Right ventricle myocardium inferior (tissue), 1 donor: ENCODE measurements at regions of chr16 and their contacts with region 1.

Region 1: DNA sequence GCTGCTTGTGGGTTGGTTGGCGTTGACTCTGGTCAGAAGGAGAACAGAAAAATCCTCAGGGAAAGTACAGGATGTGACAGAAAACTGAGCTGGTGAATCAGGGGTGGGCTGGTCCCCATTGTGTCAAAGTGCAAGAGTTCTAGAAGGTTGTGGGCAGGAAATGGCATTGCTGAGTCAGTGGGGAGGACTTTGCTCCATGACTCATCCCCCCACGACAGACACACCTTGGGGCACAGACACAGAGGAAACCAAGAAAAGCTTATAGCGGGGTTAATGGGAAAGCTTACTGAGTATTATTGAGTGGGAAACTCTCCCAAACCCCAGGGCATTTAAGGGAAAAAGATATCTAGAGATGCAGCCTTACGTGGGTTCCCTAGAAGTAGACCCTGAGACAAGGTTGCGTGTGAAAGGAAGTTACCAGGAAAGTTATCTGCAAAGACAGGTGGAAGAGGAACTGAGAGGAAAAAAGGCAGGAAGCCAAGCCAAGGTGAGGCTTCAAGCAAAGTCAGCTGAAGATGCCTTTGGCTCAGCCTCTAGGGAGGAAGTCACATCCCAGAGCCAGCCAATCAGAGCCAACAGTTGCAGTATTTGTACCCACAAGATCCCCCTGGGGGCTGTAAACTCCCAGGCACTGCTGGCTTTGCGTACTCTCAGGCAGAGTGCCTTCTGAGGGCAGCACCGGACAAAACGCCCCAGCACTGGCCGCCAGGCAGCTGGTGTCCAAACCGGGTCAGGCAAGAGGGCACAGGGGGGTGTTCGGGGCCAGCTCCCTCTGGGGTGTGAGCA is 86.4 kb downstream of the FOXL1 start:
- DNase-seq: no peak
- ATAC-seq: no peak

Region 2: DNA sequence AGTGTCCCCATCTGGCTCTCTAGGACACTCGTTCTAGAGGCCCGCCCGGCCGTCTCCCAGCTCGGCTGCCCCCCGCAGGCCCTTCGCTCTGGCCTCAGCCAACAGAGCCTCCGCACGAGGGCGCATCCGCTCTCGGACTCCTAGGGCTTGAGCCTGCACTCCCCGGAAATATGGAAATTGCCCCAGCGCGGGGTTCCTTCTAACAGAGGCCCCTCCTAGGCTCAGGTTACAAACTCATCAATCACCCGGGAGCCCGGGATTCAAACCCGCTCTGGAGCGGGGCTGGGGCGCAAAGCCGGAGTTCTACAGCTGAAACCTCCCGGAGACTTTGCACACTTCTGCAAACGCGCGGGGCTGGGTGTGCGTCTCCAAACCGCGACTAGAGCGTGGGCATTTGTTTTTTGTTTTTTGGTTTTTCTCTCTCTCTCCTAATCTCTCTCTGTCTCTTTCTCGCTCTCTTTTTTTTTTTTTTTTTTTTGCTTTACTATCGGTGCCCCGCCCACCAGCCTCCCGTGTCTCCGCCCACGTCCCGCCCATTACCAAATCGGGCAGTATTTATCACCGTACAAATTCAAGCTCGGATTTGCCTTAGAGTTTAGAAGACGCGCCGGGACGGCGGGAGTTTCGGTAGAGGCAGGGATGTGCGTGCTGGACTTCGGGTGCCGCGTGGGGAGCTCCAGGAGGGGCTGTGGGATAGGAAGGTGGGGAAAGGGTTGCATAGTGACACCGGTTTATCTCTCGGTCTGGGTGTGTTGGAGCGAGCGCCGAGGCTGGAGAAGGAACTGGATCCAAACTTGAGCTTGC is 88.8 kb before region 1 on chr16:
- intact Hi-C with region 1: loop called (anchors 5 kb)
- DNase-seq: peak; percentile 89
- ATAC-seq: peak; percentile 92

Region 3: GRCh38 chr16:86604436-86605193 is 60.1 kb before region 1 on chr16:
- intact Hi-C with region 1: no loop called
- DNase-seq: no peak
- ATAC-seq: no peak